CD4-positive, alpha-beta T cell (primary cell): ENCODE measurements at regions of chr17 and their contacts with region 1.

Region 1: DNA sequence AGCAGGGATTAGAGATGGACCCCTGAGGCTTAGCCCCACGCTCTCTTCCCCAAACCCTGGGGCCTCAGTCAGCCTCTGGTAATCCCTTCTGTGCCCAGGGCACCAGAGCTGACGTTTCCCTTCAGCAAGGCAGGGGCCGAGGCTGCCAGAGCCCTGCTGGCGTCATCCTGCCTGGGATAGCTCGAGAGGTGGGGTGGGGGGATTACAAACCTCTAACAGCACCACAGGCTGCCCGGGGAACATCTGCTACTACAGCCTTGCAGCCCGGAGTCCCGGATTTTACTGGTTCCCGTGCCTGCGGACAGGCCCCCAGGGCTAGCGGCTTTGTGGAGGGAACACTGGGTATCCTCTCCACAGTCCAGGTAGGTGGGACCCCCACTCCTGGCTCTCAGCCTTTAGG is at the start of gene AANAT:
- DNase-seq: no peak
- ATAC-seq: no peak
- H3K4me3 ChIP-seq: no peak within 1 kb of the TSS
- H3K4me3 Mint-ChIP-seq: no peak within 1 kb of the TSS
- H3K27ac ChIP-seq: no peak within 1 kb of the TSS
- H3K27ac Mint-ChIP-seq: no peak within 1 kb of the TSS
- H3K4me1 ChIP-seq: peaks cover 6% of the 10 kb centered on the region
- H3K4me1 Mint-ChIP-seq: peaks cover 4% of the 10 kb centered on the region
- H3K27me3 ChIP-seq: no peaks in the 10 kb centered on the region
- H3K27me3 Mint-ChIP-seq: no peaks in the 10 kb centered on the region
- CTCF ChIP-seq: no peak
- total RNA-seq, gene AANAT: 0.14 TPM in 1 of 2 experiments, not detected in the other

Region 2: DNA sequence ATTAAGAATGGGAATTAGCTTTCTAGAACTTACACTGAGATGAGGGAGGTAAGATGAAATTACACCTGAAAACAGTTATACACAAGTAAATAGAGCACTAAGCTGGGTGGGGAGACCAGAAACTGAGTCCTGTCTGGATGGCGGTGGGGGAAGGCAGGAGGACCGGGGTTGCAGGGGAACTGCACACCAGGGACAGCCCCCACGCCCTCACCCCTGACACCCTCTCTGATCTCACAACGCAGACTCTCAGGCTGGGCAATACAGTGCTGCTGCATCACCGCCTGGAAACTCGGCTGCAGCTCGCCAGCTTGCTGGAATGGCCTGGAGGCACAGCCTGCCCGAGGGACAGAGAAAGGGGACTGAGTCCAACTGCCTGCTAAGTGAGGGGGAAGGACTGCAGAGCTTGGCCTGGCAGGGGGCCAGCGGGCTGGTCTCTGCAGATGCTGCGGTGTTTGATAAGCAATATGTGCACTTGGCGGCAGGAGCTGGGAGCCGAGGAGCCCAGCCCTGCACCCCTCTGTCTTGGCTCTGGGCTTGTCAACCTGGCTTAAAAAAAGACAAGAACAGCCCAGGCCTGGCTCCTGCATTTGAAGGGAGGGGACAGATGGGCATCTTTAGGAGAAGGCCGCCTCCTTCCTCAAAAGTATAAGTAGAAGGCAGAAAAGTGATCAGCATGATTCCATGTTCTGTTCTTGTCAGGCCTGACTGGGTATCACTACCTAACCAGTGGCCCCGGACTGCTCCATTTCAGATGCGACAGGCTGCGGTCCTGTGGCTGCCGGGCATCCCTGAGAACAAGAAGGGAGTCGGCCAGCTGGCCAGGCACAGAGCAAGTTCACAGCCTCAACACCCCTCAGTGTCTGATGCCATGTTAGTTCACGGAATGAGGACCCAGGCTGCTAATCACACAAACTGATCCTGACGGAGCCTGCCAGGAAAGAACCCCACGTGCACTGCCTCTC is 52.8 kb before region 1 on chr17:
- CTCF ChIA-PET with region 1: no interaction called
- POLR2A ChIA-PET with region 1: no interaction called
- intact Hi-C with region 1: loop called in 1 of 2 experiments (anchors 5 kb)
- DNase-seq: no peak
- ATAC-seq: no peak
- H3K4me3 ChIP-seq: no peak overlapping the region
- H3K4me3 Mint-ChIP-seq: no peak overlapping the region
- H3K27ac ChIP-seq: no peak overlapping the region
- H3K27ac Mint-ChIP-seq: no peak overlapping the region
- H3K4me1 ChIP-seq: peaks cover 2% of the 10 kb centered on the region
- H3K4me1 Mint-ChIP-seq: peaks cover 9% of the 10 kb centered on the region
- H3K27me3 ChIP-seq: no peaks in the 10 kb centered on the region
- H3K27me3 Mint-ChIP-seq: no peaks in the 10 kb centered on the region
- CTCF ChIP-seq: no peak

Region 3: GRCh38 chr17:76506408-76507349 is 39.3 kb after region 1 on chr17:
- CTCF ChIA-PET with region 1: interaction called, 5 read pairs
- POLR2A ChIA-PET with region 1: interaction called, 3 read pairs
- intact Hi-C with region 1: loop called (anchors 1 kb)
- DNase-seq: peak; percentile 74 to 94 (median 88)
- ATAC-seq: peak; percentile 85
- H3K4me3 ChIP-seq: no peak overlapping the region
- H3K4me3 Mint-ChIP-seq: no peak overlapping the region
- H3K27ac ChIP-seq: no peak overlapping the region
- H3K27ac Mint-ChIP-seq: no peak overlapping the region
- H3K4me1 ChIP-seq: peaks cover 32% of the 10 kb centered on the region
- H3K4me1 Mint-ChIP-seq: peaks cover 16% of the 10 kb centered on the region
- H3K27me3 ChIP-seq: no peaks in the 10 kb centered on the region
- H3K27me3 Mint-ChIP-seq: no peaks in the 10 kb centered on the region
- CTCF ChIP-seq: peak; percentile 89

Region 4: DNA sequence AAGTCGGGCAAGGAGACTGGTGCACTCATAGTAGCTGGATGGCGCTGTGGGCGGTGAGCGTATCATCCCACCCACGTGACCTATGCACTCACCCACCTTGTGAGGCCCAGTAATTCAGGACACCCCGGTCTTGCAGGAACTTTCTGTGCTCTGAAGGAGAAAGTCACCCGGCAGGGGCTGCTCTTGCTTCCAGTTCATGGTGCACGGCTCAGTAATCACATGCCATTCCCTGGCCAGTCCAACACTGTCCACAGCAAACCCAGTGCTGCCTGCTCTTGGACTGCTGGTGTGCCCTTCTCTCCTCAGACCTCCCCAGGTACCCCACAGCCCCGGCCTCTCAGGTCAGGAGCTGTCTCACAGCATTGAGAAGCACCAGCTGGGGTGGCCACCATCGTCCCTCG is 50.3 kb after region 1 on chr17:
- CTCF ChIA-PET with region 1: no interaction called
- POLR2A ChIA-PET with region 1: no interaction called
- intact Hi-C with region 1: no loop called
- DNase-seq: peak in 1 of 14 experiments; percentile 47
- ATAC-seq: no peak
- H3K4me3 ChIP-seq: no peak overlapping the region
- H3K4me3 Mint-ChIP-seq: no peak overlapping the region
- H3K27ac ChIP-seq: peak overlapping the region in 1 of 2 donors; percentile 44
- H3K27ac Mint-ChIP-seq: peak overlapping the region; percentile 82
- H3K4me1 ChIP-seq: peaks cover 67% of the 10 kb centered on the region
- H3K4me1 Mint-ChIP-seq: peaks cover 37% of the 10 kb centered on the region
- H3K27me3 ChIP-seq: no peaks in the 10 kb centered on the region
- H3K27me3 Mint-ChIP-seq: no peaks in the 10 kb centered on the region
- CTCF ChIP-seq: no peak

Region 5: DNA sequence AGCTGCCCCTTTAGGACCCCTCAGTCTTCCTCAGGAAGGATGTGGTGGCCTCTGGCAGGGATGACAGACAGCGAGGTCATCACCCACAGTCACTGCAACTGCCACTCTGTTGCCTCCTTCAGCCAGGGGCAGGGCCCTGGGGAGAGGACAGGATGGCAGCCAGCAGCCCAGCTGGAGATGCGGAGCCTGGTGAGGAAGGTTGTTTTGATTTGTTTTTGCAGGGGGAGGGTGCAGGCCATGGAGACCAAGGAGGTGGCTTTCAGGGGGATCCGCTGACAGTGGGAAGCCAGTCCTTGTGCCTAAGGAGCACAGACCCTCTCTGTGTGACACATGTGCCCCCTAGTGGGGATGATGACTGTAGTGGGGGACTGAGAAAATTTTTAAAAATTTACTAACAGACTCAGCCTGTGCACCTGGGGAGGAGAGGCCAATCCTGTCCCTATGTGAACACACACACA is 79.8 kb after region 1 on chr17:
- CTCF ChIA-PET with region 1: no interaction called
- POLR2A ChIA-PET with region 1: no interaction called
- intact Hi-C with region 1: loop called (anchors 1 kb)
- DNase-seq: peak; percentile 37 to 80 (median 55)
- ATAC-seq: peak; percentile 93
- H3K4me3 ChIP-seq: no peak overlapping the region
- H3K4me3 Mint-ChIP-seq: no peak overlapping the region
- H3K27ac ChIP-seq: no peak overlapping the region
- H3K27ac Mint-ChIP-seq: no peak overlapping the region
- H3K4me1 ChIP-seq: peaks cover 7% of the 10 kb centered on the region
- H3K4me1 Mint-ChIP-seq: no peaks in the 10 kb centered on the region
- H3K27me3 ChIP-seq: peaks cover 0 to 7% of the 10 kb centered on the region in 2 experiments
- H3K27me3 Mint-ChIP-seq: peaks cover 12% of the 10 kb centered on the region
- CTCF ChIP-seq: peak; percentile 62

Region 6: DNA sequence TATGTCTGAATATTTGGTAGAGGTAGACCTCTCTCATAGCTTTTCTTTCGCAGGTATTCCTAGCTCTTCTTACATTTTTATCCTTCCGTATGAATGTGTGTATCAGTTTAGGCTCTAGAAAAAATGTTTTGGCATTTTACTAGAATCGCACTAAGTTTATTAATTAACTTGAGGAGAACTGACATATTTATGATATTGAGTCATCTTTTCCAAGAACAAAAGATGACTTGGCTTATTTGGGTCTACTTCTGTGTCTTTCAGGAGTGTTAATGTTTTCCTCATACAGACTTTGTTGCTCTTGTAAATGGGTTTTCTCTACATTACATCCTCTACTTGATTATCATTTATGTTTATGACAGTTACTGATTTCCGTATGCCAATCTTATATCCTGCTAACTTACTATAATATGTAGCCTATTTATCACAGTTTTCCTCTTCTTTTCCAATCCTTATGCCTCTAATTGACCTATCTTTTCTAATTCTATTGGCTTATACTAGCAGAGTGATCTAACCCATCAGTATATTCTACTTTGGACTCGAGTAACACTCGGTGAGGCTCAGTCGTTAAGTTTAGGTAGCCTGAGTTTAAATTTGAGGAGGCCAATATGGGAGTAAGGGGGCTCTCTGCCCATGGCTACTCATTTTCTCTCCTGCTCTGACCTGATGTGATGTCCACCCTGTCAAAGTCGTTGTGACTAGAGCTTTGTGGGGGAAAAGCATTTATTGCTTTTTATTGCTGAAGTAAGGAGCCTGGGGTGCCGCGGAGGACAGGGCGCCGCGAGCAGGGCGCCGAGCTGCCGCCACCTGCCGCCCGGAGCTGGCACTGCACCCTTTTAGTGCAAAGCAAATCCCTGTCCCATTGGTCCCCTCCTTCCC is 156.1 kb after region 1 on chr17:
- CTCF ChIA-PET with region 1: interaction called, 6 read pairs
- POLR2A ChIA-PET with region 1: no interaction called
- intact Hi-C with region 1: loop called (anchors 1 kb)
- DNase-seq: peak; percentile 59 to 87 (median 74)
- ATAC-seq: peak; percentile 99
- H3K4me3 ChIP-seq: no peak overlapping the region
- H3K4me3 Mint-ChIP-seq: no peak overlapping the region
- H3K27ac ChIP-seq: no peak overlapping the region
- H3K27ac Mint-ChIP-seq: no peak overlapping the region
- H3K4me1 ChIP-seq: peaks cover 5% of the 10 kb centered on the region
- H3K4me1 Mint-ChIP-seq: peaks cover 5% of the 10 kb centered on the region
- H3K27me3 ChIP-seq: no peaks in the 10 kb centered on the region
- H3K27me3 Mint-ChIP-seq: peaks cover 10% of the 10 kb centered on the region
- CTCF ChIP-seq: peak; percentile 94